Gastrocnemius medialis (tissue), 4 donors: ENCODE measurements at regions of chr4 and their contacts with region 1.

Region 1: DNA sequence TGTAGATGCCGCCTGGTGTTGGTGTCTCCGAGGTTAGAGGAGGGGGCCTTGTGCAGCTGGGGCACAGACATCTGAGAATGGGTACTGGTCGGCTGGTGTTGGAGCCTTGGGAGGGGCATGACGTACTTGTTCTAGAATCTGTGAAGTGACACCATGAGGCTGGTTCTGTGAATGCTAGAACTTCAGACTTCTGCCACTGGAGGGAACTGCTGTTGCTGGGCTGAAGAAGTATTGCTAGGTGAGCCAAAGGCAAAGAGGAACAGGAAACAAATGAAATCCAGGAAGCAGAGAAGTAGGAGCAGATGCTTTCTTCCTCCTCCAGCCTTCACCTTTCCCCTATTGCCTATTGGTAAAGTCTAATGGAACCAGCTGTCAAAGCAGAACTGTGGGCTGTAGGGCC is 120.9 kb upstream of the DDIT4L start:
- DNase-seq: peak in 1 of 2 donors; percentile 24
- ATAC-seq: no peak
- H3K4me3 ChIP-seq: no peak overlapping the region
- H3K27ac ChIP-seq: no peak overlapping the region
- H3K4me1 ChIP-seq: peaks cover 21 to 22% of the 10 kb centered on the region in 2 donors
- H3K27me3 ChIP-seq: no peaks in the 10 kb centered on the region
- CTCF ChIP-seq: peak in 1 of 5 experiments; percentile 9
- POLR2A ChIP-seq: no peak

Region 2: GRCh38 chr4:99821918-99822503 is 489.2 kb before region 1 on chr4:
- in situ Hi-C with region 1: no loop called
- intact Hi-C with region 1: no loop called
- DNase-seq: no peak
- ATAC-seq: no peak
- H3K4me3 ChIP-seq: no peak overlapping the region
- H3K27ac ChIP-seq: no peak overlapping the region
- H3K4me1 ChIP-seq: no peaks in the 10 kb centered on the region
- H3K27me3 ChIP-seq: no peaks in the 10 kb centered on the region
- CTCF ChIP-seq: no peak
- POLR2A ChIP-seq: no peak

Region 3: GRCh38 chr4:100240008-100240407 is 71.2 kb before region 1 on chr4:
- in situ Hi-C with region 1: loop called in 1 of 4 experiments (anchors 10 kb)
- intact Hi-C with region 1: no loop called
- DNase-seq: no peak
- ATAC-seq: peak in 1 of 2 donors; percentile 28
- H3K4me3 ChIP-seq: no peak overlapping the region
- H3K27ac ChIP-seq: peak overlapping the region in 3 of 4 donors; percentile 18 to 19 (median 18)
- H3K4me1 ChIP-seq: peaks cover 7 to 16% of the 10 kb centered on the region in 2 donors
- H3K27me3 ChIP-seq: no peaks in the 10 kb centered on the region
- CTCF ChIP-seq: no peak
- POLR2A ChIP-seq: no peak

Region 4: DNA sequence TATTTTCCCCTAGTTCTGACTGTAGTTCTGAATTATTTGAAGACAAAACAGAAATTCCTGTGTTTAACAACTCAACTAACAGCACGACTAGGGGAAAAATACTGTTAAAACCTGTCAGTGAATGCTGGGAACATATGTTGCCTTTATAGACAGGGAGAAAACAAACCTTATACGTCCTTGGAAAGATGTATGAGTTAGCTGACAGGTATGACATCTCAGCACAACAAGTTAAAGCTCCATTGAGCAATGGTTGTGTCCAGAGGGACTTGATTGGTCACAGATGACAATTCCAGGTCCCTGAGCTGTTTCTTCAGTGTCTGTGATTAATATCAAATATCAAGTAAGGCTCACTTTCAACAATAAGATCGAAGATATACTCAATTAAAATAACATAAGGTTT is 62.7 kb before region 1 on chr4:
- in situ Hi-C with region 1: loop called in 1 of 4 experiments (anchors 10 kb)
- intact Hi-C with region 1: loop called (anchors 2 kb)
- DNase-seq: no peak
- ATAC-seq: peak; percentile 26 to 57
- H3K4me3 ChIP-seq: no peak overlapping the region
- H3K27ac ChIP-seq: peak overlapping the region; percentile 12 to 64 (median 53)
- H3K4me1 ChIP-seq: peaks cover 16 to 30% of the 10 kb centered on the region in 2 donors
- H3K27me3 ChIP-seq: no peaks in the 10 kb centered on the region
- CTCF ChIP-seq: no peak
- POLR2A ChIP-seq: no peak

Region 5: GRCh38 chr4:100421361-100421978 is 110.3 kb after region 1 on chr4:
- in situ Hi-C with region 1: no loop called
- intact Hi-C with region 1: loop called (anchors 10 kb)
- DNase-seq: no peak
- ATAC-seq: peak; percentile 75 to 76
- H3K4me3 ChIP-seq: peak overlapping the region; percentile 20 to 59 (median 42)
- H3K27ac ChIP-seq: peak overlapping the region; percentile 38 to 84 (median 75)
- H3K4me1 ChIP-seq: peaks cover 9 to 39% of the 10 kb centered on the region in 2 donors
- H3K27me3 ChIP-seq: no peaks in the 10 kb centered on the region
- CTCF ChIP-seq: peak; percentile 28 to 68 (median 62)
- POLR2A ChIP-seq: no peak